Caco-2 (cell line): ENCODE measurements at regions of chr3 and their contacts with region 1.

Region 1: DNA sequence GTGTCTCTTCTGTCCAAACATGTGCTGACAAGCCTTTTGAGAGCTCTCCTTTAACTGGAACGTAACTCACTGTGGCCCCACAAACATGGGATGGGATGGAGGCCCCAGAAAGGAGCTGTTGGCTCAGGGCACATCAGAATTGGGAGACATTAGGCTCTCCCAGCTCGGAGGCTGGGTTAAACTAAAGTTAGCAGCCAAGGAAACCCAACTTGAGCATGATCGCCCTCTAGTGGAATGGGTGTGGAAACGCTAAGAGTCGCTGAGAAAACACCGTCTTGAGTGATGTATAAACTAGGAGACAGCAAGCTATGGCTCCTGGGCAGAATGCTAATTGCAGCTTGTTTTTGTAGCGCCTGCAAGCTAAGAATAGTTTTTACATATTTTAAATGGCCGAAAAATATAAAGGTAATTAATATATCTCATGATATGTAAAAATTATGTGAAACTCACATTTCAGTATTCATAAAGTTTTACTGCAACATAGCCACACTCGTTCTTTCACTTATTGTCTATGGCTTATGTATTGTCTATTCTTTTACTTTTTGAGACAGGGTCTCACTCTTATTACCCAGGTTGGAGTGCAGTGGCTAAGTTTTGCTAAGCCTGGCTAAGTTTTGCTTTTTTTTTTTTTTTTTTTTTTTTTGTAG is 138.8 kb upstream of the HACD2 start:
- DNase-seq: peak; percentile 64 to 78
- H3K4me3 ChIP-seq: no peak overlapping the region
- H3K4me3 Mint-ChIP-seq: no peak overlapping the region
- H3K27ac Mint-ChIP-seq: no peak overlapping the region
- H3K4me1 ChIP-seq: no peaks in the 10 kb centered on the region
- H3K4me1 Mint-ChIP-seq: no peaks in the 10 kb centered on the region
- H3K27me3 ChIP-seq: no peaks in the 10 kb centered on the region
- H3K27me3 Mint-ChIP-seq: no peaks in the 10 kb centered on the region
- CTCF ChIP-seq: peak; percentile 47 to 86

Region 2: DNA sequence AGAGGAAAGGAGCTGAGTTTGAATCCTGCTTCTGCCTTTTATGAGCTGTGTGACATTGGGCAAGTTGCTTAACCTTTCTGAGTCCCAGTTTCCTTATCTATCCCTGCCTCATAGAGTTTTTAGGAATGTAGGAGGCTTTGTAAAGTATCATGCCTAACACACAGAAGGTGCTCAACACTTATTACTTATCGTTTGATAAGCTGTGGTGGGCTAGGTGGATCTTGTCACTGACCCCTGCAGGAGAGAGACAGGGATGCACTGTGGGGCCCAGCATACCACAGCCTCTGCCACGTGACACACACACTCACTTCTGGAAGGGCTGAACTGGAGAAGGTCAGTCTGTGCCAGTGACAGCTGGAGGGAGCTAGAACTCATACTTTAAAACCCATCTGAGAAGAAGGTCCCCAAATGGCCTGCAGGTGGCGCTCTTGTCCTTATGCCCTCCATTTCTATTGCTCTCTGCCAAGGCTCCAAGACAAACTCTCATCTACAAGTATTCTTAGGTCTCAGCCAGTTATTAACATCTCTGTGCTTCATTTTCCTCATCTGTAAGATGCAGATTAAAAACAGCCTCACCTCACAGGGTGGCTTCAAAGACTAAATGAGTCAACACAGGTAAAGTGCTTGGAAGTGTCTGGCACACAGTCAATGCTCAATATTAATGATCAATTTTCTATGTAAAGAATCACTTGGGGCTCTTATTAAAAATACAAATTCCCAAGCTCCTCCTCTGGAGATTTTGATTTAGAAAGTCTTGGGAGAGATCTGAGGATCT is 81.3 kb before region 1 on chr3:
- CTCF ChIA-PET with region 1: interaction called, 10 read pairs
- POLR2A ChIA-PET with region 1: no interaction called
- intact Hi-C with region 1: no loop called
- DNase-seq: peak; percentile 72 to 77
- H3K4me3 ChIP-seq: no peak overlapping the region
- H3K4me3 Mint-ChIP-seq: no peak overlapping the region
- H3K27ac Mint-ChIP-seq: no peak overlapping the region
- H3K4me1 ChIP-seq: no peaks in the 10 kb centered on the region
- H3K4me1 Mint-ChIP-seq: peaks cover 3% of the 10 kb centered on the region
- H3K27me3 ChIP-seq: no peaks in the 10 kb centered on the region
- H3K27me3 Mint-ChIP-seq: no peaks in the 10 kb centered on the region
- CTCF ChIP-seq: peak; percentile 64 to 73

Region 3: GRCh38 chr3:123652346-123652984 is 71.2 kb before region 1 on chr3:
- CTCF ChIA-PET with region 1: interaction called, 29 read pairs
- POLR2A ChIA-PET with region 1: no interaction called
- intact Hi-C with region 1: loop called (anchors 1 kb)
- DNase-seq: peak; percentile 77 to 90
- H3K4me3 ChIP-seq: no peak overlapping the region
- H3K4me3 Mint-ChIP-seq: no peak overlapping the region
- H3K27ac Mint-ChIP-seq: no peak overlapping the region
- H3K4me1 ChIP-seq: no peaks in the 10 kb centered on the region; the same call in 1 of the 2 replicates
- H3K4me1 Mint-ChIP-seq: peaks cover 15% of the 10 kb centered on the region
- H3K27me3 ChIP-seq: no peaks in the 10 kb centered on the region
- H3K27me3 Mint-ChIP-seq: no peaks in the 10 kb centered on the region
- CTCF ChIP-seq: peak; percentile 87 to 96

Region 4: DNA sequence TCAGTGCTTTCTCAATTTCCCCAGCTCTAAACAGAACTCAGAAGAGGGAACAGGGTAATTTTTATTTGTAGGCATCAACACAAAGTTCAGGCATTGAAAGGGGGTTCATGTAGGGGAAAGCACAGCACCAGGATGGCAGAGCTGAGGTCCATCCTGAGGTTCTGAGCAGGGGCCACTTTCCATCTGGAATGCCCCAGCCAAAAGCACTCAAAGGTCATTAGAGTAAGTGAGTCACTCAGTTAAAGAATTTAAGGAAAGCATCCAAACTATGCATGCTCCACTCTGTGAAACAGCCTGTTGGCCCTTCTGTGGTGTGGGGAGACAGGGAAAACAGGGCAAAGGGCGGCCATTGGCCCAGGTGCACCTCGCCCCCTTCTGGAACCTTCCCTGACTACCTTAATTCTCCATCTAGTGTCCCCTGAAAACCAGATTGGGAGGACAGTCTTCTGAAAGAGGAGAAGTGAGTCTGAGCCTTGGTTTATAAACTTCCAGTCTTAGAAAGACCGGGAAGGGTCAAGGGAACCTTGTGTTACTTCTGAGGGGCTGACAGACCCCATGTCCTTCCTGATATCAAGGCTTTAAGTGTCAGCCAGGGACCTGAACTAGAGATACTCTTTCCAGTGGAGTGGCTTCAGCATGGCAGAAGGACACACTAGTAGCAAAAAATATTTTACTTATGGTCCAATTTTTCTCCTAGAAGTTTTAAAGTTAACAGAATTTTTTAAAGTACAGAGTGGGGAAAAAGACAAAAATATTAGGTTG is 27.2 kb after region 1 on chr3:
- CTCF ChIA-PET with region 1: interaction called, 10 read pairs
- POLR2A ChIA-PET with region 1: no interaction called
- intact Hi-C with region 1: loop called (anchors 2 kb)
- DNase-seq: peak; percentile 75 to 87
- H3K4me3 ChIP-seq: no peak overlapping the region
- H3K4me3 Mint-ChIP-seq: peak overlapping the region; percentile 34
- H3K27ac Mint-ChIP-seq: peak overlapping the region; percentile 94
- H3K4me1 ChIP-seq: peaks cover 59% of the 10 kb centered on the region
- H3K4me1 Mint-ChIP-seq: peaks cover 33% of the 10 kb centered on the region
- H3K27me3 ChIP-seq: no peaks in the 10 kb centered on the region
- H3K27me3 Mint-ChIP-seq: no peaks in the 10 kb centered on the region
- CTCF ChIP-seq: no peak

Region 5: DNA sequence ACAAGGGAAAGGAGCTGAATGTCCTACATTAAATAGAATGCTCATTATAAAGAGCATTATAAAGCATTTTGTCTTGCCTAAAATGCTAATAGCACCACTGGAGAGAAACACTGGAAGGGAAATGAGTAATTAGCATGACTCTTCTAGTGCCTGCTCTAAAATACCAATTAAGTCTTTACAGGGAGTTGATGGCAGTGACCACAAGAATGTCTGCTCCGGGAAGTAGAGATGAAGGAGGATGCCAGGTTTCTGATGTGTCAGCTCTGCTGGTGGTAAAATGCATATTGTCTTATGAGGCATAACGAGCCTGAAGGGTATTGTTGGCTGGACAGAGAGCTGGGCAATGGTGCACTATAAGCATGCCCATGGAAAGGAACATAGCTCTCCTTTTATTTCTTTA is 111.0 kb after region 1 on chr3:
- CTCF ChIA-PET with region 1: no interaction called
- POLR2A ChIA-PET with region 1: no interaction called
- intact Hi-C with region 1: no loop called
- DNase-seq: no peak
- H3K4me3 ChIP-seq: no peak overlapping the region
- H3K4me3 Mint-ChIP-seq: no peak overlapping the region
- H3K27ac Mint-ChIP-seq: no peak overlapping the region
- H3K4me1 ChIP-seq: no peaks in the 10 kb centered on the region
- H3K4me1 Mint-ChIP-seq: no peaks in the 10 kb centered on the region
- H3K27me3 ChIP-seq: no peaks in the 10 kb centered on the region
- H3K27me3 Mint-ChIP-seq: no peaks in the 10 kb centered on the region
- CTCF ChIP-seq: no peak